CD4-positive, alpha-beta T cell (primary cell): ENCODE measurements at regions of chr7 and their contacts with region 1.

Region 1: DNA sequence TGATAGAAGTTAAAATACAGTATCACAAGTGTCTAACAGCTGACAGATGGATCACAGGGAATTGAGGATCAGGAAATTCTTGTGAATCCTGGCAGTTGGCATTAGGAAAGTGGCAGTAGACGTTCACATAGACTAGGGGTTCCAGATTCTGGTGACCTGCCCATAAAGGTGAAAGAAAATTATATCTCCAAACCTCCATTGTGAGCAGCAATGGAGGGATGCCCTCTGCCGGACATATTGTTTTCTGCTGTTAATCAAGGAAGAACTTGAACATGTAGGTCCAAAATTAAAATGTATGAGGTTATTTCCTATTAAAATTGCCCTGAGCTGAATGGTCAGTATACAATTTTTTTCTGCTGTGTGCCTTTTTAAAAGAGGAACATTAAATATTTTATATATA is 5.1 kb downstream of the NME8 start:
- DNase-seq: no peak
- ATAC-seq: no peak
- H3K4me3 ChIP-seq: no peak overlapping the region
- H3K4me3 Mint-ChIP-seq: no peak overlapping the region
- H3K27ac ChIP-seq: no peak overlapping the region
- H3K27ac Mint-ChIP-seq: no peak overlapping the region
- H3K4me1 ChIP-seq: no peaks in the 10 kb centered on the region
- H3K4me1 Mint-ChIP-seq: no peaks in the 10 kb centered on the region
- H3K27me3 ChIP-seq: no peaks in the 10 kb centered on the region
- H3K27me3 Mint-ChIP-seq: peaks cover 12% of the 10 kb centered on the region
- CTCF ChIP-seq: no peak

Region 2: DNA sequence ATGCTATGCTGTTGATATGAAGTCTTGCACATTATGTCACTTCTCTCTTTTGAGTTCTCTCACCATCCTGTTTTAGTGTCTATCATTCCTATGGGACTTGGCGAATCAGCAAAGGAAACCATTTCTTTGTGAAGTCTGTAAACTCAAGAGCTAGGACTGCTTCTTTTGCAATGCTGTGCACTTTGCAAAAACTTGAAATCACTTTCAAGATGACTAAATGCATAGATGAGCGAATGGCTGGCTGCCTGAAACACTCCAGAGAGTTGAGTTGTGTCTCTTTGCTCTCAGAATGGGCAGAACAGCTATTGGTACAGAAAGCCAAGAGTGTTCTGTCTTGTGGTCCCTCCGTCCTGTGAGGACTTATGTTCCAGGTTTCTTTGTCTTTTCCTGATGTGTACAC is 386.5 kb before region 1 on chr7:
- CTCF ChIA-PET with region 1: no interaction called
- POLR2A ChIA-PET with region 1: no interaction called
- intact Hi-C with region 1: no loop called
- DNase-seq: no peak
- ATAC-seq: no peak
- H3K4me3 ChIP-seq: no peak overlapping the region
- H3K4me3 Mint-ChIP-seq: no peak overlapping the region
- H3K27ac ChIP-seq: no peak overlapping the region
- H3K27ac Mint-ChIP-seq: no peak overlapping the region
- H3K4me1 ChIP-seq: no peaks in the 10 kb centered on the region
- H3K4me1 Mint-ChIP-seq: no peaks in the 10 kb centered on the region
- H3K27me3 ChIP-seq: no peaks in the 10 kb centered on the region
- H3K27me3 Mint-ChIP-seq: peaks cover 8% of the 10 kb centered on the region
- CTCF ChIP-seq: no peak

Region 3: GRCh38 chr7:37786741-37787569 is 66.5 kb before region 1 on chr7:
- CTCF ChIA-PET with region 1: no interaction called
- POLR2A ChIA-PET with region 1: no interaction called
- intact Hi-C with region 1: no loop called
- DNase-seq: peak in 3 of 14 experiments; percentile 25 to 32 (median 31)
- ATAC-seq: no peak
- H3K4me3 ChIP-seq: no peak overlapping the region
- H3K4me3 Mint-ChIP-seq: no peak overlapping the region
- H3K27ac ChIP-seq: no peak overlapping the region
- H3K27ac Mint-ChIP-seq: no peak overlapping the region
- H3K4me1 ChIP-seq: no peaks in the 10 kb centered on the region
- H3K4me1 Mint-ChIP-seq: peaks cover 10% of the 10 kb centered on the region
- H3K27me3 ChIP-seq: peaks cover 0 to 4% of the 10 kb centered on the region in 2 experiments
- H3K27me3 Mint-ChIP-seq: peaks cover 14% of the 10 kb centered on the region
- CTCF ChIP-seq: no peak

Region 4: GRCh38 chr7:37882086-37882485 is 28.6 kb after region 1 on chr7:
- CTCF ChIA-PET with region 1: no interaction called
- POLR2A ChIA-PET with region 1: no interaction called
- intact Hi-C with region 1: loop called in 1 of 2 experiments (anchors 1 kb)
- DNase-seq: peak in 1 of 14 experiments; percentile 0
- ATAC-seq: no peak
- H3K4me3 ChIP-seq: no peak overlapping the region
- H3K4me3 Mint-ChIP-seq: no peak overlapping the region
- H3K27ac ChIP-seq: no peak overlapping the region
- H3K27ac Mint-ChIP-seq: no peak overlapping the region
- H3K4me1 ChIP-seq: no peaks in the 10 kb centered on the region
- H3K4me1 Mint-ChIP-seq: no peaks in the 10 kb centered on the region
- H3K27me3 ChIP-seq: no peaks in the 10 kb centered on the region
- H3K27me3 Mint-ChIP-seq: peaks cover 22% of the 10 kb centered on the region
- CTCF ChIP-seq: no peak